Activated CD8-positive, alpha-beta T cell treated with anti-CD3 and anti-CD28 coated beads for 36 hours (primary cell): ENCODE measurements at regions of chr6 and their contacts with region 1.

Region 1: GRCh38 chr6:83067448-83068413 is at the start of gene DOP1A:
- DNase-seq: peak; percentile 99
- ATAC-seq: peak; percentile 85
- H3K4me3 Mint-ChIP-seq: peak within 1 kb of the TSS; percentile 90
- H3K27ac Mint-ChIP-seq: peak within 1 kb of the TSS; percentile 86
- H3K4me1 Mint-ChIP-seq: peaks cover 47% of the 10 kb centered on the region
- H3K27me3 Mint-ChIP-seq: no peaks in the 10 kb centered on the region
- CTCF ChIP-seq: peak; percentile 85
- total RNA-seq, gene DOP1A: 6.6 to 7.7 TPM

Region 2: DNA sequence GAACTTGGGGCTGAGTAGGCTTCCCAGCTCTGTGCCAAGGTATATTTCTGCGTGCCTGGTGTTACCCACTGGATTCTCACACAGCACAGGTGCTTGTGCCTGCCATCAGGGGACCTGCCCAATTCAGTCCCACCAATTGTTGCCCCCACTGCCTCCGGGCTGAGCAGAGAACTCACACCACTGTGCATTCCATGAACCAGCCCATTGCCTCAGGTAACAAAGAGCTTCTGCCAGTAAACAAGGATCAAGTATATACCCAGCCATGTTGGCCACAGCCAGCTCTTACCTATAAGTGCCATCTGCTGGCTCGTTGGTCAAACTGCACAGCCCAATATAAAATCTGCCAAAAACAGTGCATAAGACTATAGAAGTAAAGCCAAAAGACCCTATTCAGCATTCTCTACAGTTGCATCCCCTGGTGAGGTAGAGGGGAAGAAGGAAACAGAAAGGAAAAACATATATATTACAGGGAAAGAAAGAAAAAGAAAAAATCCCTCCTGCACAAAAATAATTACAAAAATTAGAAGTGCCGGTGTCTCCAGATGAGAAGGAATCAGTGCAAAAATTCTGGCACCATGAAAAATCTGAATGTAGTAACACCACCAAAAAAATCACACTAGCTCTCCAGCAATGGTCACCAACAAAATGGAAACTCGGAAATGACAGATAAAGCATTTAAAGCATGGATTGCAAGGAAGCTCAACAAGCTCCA is 1061.5 kb before region 1 on chr6:
- CTCF ChIA-PET with region 1: no interaction called
- POLR2A ChIA-PET with region 1: no interaction called
- intact Hi-C with region 1: no loop called
- DNase-seq: peak; percentile 4
- ATAC-seq: peak; percentile 39
- H3K4me3 Mint-ChIP-seq: no peak overlapping the region
- H3K27ac Mint-ChIP-seq: no peak overlapping the region
- H3K4me1 Mint-ChIP-seq: no peaks in the 10 kb centered on the region
- H3K27me3 Mint-ChIP-seq: no peaks in the 10 kb centered on the region
- CTCF ChIP-seq: peak; percentile 39

Region 3: GRCh38 chr6:82270881-82271645 is 796.7 kb before region 1 on chr6:
- CTCF ChIA-PET with region 1: interaction called, 13 read pairs
- POLR2A ChIA-PET with region 1: no interaction called
- intact Hi-C with region 1: no loop called
- DNase-seq: no peak
- ATAC-seq: peak; percentile 34
- H3K4me3 Mint-ChIP-seq: no peak overlapping the region
- H3K27ac Mint-ChIP-seq: no peak overlapping the region
- H3K4me1 Mint-ChIP-seq: no peaks in the 10 kb centered on the region
- H3K27me3 Mint-ChIP-seq: no peaks in the 10 kb centered on the region
- CTCF ChIP-seq: peak; percentile 73

Region 4: DNA sequence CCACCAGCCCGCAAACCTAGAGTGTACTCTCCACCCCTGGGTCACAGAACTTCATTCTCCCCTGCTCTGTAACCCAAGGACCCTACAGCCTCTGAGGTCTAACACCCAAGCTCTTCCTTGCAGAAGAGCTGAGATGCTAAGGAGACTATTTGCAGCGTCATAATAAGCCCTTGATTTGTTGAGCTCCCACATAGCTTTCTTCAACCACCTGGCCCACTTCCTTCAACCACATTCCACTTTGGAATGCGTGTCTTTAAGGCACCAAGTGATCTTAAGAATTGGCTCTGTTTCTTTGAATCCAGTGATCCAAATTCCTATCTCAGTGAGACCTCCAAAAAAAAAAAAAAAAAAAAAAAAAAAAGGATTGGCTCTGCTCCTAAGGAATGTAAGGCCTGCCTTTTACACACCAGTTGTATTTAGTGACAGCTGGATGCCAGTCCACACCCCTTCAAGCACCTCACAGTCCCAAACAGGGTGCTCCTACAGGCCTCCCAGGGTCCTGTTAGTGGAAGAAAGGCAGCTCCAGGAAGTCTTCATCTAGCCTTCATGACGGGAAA is 108.3 kb before region 1 on chr6:
- CTCF ChIA-PET with region 1: no interaction called
- POLR2A ChIA-PET with region 1: no interaction called
- intact Hi-C with region 1: no loop called
- DNase-seq: no peak
- ATAC-seq: no peak
- H3K4me3 Mint-ChIP-seq: no peak overlapping the region
- H3K27ac Mint-ChIP-seq: no peak overlapping the region
- H3K4me1 Mint-ChIP-seq: no peaks in the 10 kb centered on the region
- H3K27me3 Mint-ChIP-seq: no peaks in the 10 kb centered on the region
- CTCF ChIP-seq: no peak

Region 5: GRCh38 chr6:83086751-83087150 is 19.0 kb after region 1 on chr6:
- CTCF ChIA-PET with region 1: interaction called, 75 read pairs
- POLR2A ChIA-PET with region 1: interaction called, 3 read pairs
- intact Hi-C with region 1: no loop called
- DNase-seq: no peak
- ATAC-seq: peak; percentile 95
- H3K4me3 Mint-ChIP-seq: peak overlapping the region; percentile 3
- H3K27ac Mint-ChIP-seq: peak overlapping the region; percentile 37
- H3K4me1 Mint-ChIP-seq: peaks cover 18% of the 10 kb centered on the region
- H3K27me3 Mint-ChIP-seq: no peaks in the 10 kb centered on the region
- CTCF ChIP-seq: no peak

Region 6: DNA sequence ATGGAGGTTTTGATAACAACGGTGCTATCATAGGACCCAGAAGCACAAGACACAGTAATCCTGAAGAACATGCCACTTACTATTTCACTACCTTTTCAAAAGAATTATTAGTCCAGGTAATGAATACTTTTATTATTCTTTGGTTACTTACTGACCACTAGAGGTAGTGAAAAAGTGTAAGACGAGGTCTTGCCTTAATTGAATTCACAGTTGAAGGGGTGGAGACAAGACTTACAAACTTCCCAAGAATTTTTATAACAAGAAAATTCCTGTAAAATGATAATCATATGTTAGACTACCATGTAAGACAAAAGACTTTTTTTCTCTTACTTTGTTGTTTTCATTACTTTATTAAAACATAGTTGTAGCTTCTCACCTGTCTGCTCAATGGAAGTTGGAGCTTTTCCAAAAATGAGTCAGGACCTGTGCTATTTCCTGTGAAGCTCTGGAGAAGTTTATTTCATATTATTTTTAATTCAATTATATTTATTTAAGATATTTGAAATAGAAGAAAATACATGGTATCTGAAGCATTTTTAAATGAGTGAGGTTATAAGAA is 52.1 kb after region 1 on chr6:
- CTCF ChIA-PET with region 1: interaction called, 17 read pairs
- POLR2A ChIA-PET with region 1: no interaction called
- intact Hi-C with region 1: no loop called
- DNase-seq: no peak
- ATAC-seq: no peak
- H3K4me3 Mint-ChIP-seq: no peak overlapping the region
- H3K27ac Mint-ChIP-seq: no peak overlapping the region
- H3K4me1 Mint-ChIP-seq: no peaks in the 10 kb centered on the region
- H3K27me3 Mint-ChIP-seq: no peaks in the 10 kb centered on the region
- CTCF ChIP-seq: no peak

Region 7: GRCh38 chr6:83169511-83169910 is 101.8 kb after region 1 on chr6:
- CTCF ChIA-PET with region 1: interaction called, 35 read pairs
- POLR2A ChIA-PET with region 1: no interaction called
- intact Hi-C with region 1: no loop called
- DNase-seq: no peak
- ATAC-seq: no peak
- H3K4me3 Mint-ChIP-seq: no peak overlapping the region
- H3K27ac Mint-ChIP-seq: no peak overlapping the region
- H3K4me1 Mint-ChIP-seq: no peaks in the 10 kb centered on the region
- H3K27me3 Mint-ChIP-seq: no peaks in the 10 kb centered on the region
- CTCF ChIP-seq: no peak

Region 8: GRCh38 chr6:83199863-83200225 is 132.1 kb after region 1 on chr6:
- CTCF ChIA-PET with region 1: interaction called, 21 read pairs
- POLR2A ChIA-PET with region 1: interaction called, 3 read pairs
- intact Hi-C with region 1: no loop called
- DNase-seq: no peak
- ATAC-seq: no peak
- H3K4me3 Mint-ChIP-seq: no peak overlapping the region
- H3K27ac Mint-ChIP-seq: no peak overlapping the region
- H3K4me1 Mint-ChIP-seq: peaks cover 15% of the 10 kb centered on the region
- H3K27me3 Mint-ChIP-seq: no peaks in the 10 kb centered on the region
- CTCF ChIP-seq: no peak

Region 9: GRCh38 chr6:83341765-83342164 is 274.0 kb after region 1 on chr6:
- CTCF ChIA-PET with region 1: no interaction called
- POLR2A ChIA-PET with region 1: no interaction called
- intact Hi-C with region 1: no loop called
- DNase-seq: no peak
- ATAC-seq: no peak
- H3K4me3 Mint-ChIP-seq: no peak overlapping the region
- H3K27ac Mint-ChIP-seq: no peak overlapping the region
- H3K4me1 Mint-ChIP-seq: no peaks in the 10 kb centered on the region
- H3K27me3 Mint-ChIP-seq: no peaks in the 10 kb centered on the region
- CTCF ChIP-seq: no peak

Region 10: DNA sequence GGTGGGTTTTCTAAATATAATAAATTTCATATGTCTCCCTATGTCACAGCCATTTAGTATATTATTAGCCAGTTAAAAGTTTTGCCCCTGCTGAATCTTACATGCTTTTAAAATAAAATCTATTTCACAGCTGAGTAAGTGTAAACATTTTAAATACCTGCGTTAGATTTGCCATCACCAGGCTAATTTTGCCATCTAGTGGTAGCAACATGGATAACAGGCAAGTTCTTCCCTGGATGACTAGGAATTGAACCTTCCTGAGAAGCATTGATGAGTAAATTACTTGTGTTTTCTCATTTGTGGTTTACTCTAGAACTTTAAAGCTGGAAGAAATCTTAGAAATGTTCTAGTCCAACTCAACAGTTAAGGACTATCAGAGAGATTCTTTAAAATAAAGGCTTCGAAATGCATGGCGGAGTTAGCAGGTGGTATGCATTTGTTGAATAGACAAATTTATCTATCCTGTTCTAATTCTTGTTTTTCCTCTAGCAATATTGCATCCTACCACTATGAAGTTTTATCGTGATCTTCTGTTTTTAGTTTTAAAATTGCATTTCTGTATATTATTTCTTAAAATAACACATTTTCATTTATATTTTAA is 447.2 kb after region 1 on chr6:
- CTCF ChIA-PET with region 1: interaction called, 43 read pairs
- POLR2A ChIA-PET with region 1: no interaction called
- intact Hi-C with region 1: loop called (anchors 5 kb)
- DNase-seq: peak; percentile 12
- ATAC-seq: peak; percentile 42
- H3K4me3 Mint-ChIP-seq: no peak overlapping the region
- H3K27ac Mint-ChIP-seq: no peak overlapping the region
- H3K4me1 Mint-ChIP-seq: peaks cover 6% of the 10 kb centered on the region
- H3K27me3 Mint-ChIP-seq: peaks cover 23% of the 10 kb centered on the region
- CTCF ChIP-seq: peak; percentile 77